HEK293 (cell line): ENCODE measurements at regions of chr17 and their contacts with region 1.

Region 1: DNA sequence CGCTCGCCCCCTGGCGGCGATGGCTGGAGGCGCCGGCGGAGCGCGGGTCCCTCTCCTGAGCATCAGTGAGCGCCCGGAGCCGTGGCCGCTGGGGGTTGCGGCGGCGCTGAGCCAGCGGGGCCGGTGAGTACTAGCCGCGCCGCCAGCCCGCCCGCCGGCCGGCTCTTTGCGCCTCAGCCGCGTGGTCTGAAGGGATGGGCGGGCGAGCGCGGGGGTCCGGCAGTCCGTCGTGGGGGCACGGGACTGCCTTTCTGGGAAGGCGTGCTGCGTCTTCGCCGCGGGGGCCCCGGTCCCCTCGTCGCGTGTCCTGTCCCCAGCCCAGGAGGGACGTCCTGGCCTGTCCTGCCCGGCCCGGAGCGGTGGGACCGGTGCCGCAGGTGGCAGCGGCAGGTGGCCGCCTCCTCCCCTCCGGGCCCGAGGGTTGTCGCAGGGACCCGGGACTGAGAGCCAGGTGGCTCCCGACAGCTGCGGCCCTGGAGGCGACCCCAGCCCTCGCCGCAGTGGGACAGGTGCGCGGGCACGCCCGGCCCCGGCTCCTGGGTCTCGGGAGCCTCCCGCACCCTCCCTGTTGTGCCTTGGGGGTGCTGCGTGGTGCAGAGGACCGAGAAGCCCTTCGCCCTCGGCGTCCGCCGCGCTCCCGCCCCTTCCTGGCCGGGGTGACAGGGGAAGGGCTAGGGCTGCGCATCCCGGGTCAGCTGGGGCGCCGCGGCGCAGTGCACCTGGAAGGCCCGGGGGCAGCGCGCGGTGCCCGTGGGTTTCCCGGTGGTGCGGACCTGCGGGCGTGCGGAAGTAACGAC is at the start of gene SPECC1:
- H3K4me3 ChIP-seq: peak within 1 kb of the TSS; percentile 87
- H3K27ac ChIP-seq: peak within 1 kb of the TSS; percentile 72
- H3K4me1 ChIP-seq: peaks cover 12% of the 10 kb centered on the region
- CTCF ChIP-seq: no peak

Region 2: GRCh38 chr17:20095336-20096080 is 86.0 kb after region 1 on chr17:
- CTCF ChIA-PET with region 1: interaction called, 16 read pairs
- POLR2A ChIA-PET with region 1: interaction called, 5 read pairs
- H3K4me3 ChIP-seq: no peak overlapping the region
- H3K27ac ChIP-seq: no peak overlapping the region
- H3K4me1 ChIP-seq: peaks cover 31% of the 10 kb centered on the region
- CTCF ChIP-seq: peak; percentile 80